HEK293 (cell line): ENCODE measurements at regions of chr5 and their contacts with region 1.

Region 1: DNA sequence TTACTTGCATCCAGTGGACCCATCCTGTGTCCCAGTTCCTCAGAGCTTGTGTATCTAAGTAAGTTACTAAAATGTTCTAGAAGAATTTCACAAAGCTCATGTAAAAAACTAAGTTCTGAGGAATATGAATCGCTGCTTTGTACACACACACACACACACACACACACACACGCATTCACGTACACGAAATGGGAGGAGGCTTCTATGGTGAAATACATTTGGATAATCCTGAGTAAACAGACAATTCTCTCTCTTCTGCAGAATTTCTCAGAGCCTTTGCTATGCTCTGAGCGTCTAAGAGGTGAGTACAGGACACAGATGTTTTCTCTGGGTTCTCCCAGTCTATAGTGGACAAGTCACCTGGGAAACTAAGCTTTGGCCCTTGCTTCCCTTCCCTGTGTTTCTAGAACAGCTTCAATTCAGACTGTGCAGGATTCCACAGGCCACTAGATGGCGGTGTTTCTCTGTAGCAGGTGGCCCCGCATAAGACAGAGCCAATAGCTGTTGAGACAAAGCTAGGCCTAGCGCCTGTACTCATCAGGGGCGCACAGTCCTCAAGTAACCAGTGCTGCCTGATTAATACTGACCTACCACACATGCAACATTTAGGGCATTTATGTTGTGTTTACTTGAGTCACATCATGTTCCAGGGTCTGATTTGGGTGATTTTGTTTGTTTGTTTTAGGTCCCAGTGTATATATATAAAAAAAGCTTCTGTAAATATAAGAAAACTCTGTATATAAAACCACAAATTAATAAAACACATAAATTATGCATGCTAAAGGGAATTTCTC is 114.8 kb downstream of the LIFR start:
- H3K4me3 ChIP-seq: no peak overlapping the region
- H3K27ac ChIP-seq: no peak overlapping the region
- H3K4me1 ChIP-seq: no peaks in the 10 kb centered on the region
- CTCF ChIP-seq: peak; percentile 97

Region 2: DNA sequence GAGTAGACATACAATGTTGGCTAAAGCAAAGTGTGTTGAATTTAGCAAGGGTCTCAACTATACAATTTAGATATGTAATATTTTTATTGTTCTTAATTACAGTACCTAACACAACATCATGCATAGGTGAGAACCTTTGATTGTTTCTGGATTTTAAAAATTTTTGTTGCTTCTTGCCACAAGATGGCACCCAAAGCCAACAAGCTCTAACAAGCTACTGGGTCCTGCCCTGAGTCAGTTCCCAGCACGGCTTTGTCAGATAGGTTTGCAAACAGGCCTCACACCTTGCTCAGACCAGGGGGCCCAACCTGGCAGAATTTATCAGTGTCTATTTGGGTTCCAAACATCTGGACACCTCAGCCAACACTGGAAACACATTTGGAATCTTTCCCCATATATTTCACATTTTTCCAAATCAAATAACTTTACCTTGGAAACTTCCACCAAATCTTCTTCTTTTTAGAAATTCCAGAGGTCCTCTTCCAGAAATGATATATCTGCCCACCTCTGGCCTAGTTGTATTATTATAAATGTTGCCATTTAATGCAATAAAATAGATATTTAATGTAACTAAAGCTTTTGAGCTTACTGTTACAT is 232.8 kb before region 1 on chr5:
- CTCF ChIA-PET with region 1: interaction called, 22 read pairs
- POLR2A ChIA-PET with region 1: no interaction called
- H3K4me3 ChIP-seq: no peak overlapping the region
- H3K27ac ChIP-seq: no peak overlapping the region
- H3K4me1 ChIP-seq: no peaks in the 10 kb centered on the region
- CTCF ChIP-seq: peak; percentile 67

Region 3: DNA sequence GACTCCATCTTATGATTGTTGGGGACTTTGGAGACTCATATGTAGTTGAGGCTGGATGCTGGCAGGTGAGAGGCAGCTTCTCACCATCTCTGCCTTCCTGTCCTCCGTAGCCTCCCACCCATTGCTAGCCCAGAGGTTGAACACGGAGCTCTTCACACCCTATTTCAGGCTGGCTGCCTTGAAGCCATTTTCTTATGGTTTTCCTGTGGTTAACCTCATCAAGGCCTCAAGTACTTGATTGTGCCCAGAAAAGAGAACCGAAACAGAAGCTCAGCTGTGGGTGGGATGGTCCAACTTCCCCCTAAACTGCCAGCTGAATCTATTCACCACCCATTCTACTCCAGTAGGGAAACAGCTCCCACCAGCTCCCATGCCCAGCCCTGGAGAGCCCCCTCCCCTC is 11.9 kb after region 1 on chr5:
- CTCF ChIA-PET with region 1: interaction called, 29 read pairs
- POLR2A ChIA-PET with region 1: no interaction called
- H3K4me3 ChIP-seq: no peak overlapping the region
- H3K27ac ChIP-seq: no peak overlapping the region
- H3K4me1 ChIP-seq: no peaks in the 10 kb centered on the region
- CTCF ChIP-seq: no peak

Region 4: GRCh38 chr5:38540314-38540713 is 98.7 kb after region 1 on chr5:
- CTCF ChIA-PET with region 1: interaction called, 19 read pairs
- POLR2A ChIA-PET with region 1: no interaction called
- H3K4me3 ChIP-seq: no peak overlapping the region
- H3K27ac ChIP-seq: no peak overlapping the region
- H3K4me1 ChIP-seq: peaks cover 40% of the 10 kb centered on the region
- CTCF ChIP-seq: no peak

Region 5: GRCh38 chr5:38666668-38667498 is 225.2 kb after region 1 on chr5:
- CTCF ChIA-PET with region 1: interaction called, 70 read pairs
- POLR2A ChIA-PET with region 1: no interaction called
- H3K4me3 ChIP-seq: no peak overlapping the region
- H3K27ac ChIP-seq: no peak overlapping the region
- H3K4me1 ChIP-seq: peaks cover 5% of the 10 kb centered on the region
- CTCF ChIP-seq: peak; percentile 77

Region 6: GRCh38 chr5:38780950-38781349 is 339.3 kb after region 1 on chr5:
- CTCF ChIA-PET with region 1: interaction called, 14 read pairs
- POLR2A ChIA-PET with region 1: no interaction called
- H3K4me3 ChIP-seq: no peak overlapping the region
- H3K27ac ChIP-seq: no peak overlapping the region
- H3K4me1 ChIP-seq: peaks cover 19% of the 10 kb centered on the region
- CTCF ChIP-seq: no peak